IMR-90 (cell line): ENCODE measurements at regions of chr2 and their contacts with region 1.

Region 1: DNA sequence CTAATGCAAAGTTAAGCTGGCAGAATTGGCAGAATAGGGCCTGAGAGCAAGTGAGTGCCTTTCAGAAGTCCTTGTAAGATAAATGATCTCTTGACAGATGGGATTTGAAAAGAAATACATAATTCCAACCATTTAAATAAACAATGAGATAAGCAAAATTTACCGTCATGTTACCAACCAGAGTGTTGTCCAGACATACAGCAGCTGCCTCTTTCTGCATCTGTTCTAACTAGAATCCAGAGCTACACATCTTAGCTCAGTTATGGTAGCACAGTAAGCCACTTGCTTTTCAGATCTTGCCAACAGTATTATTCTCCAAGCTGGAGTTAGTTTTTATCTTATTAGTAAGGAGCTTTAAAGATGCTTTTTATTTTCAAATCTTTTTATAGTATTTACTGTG is 179.6 kb downstream of the BARD1 start:
- DNase-seq: peak; percentile 47
- ATAC-seq: peak; percentile 59
- H3K4me3 ChIP-seq: no peak overlapping the region
- H3K27ac ChIP-seq: no peak overlapping the region
- H3K4me1 ChIP-seq: peaks cover 2% of the 10 kb centered on the region; the same call in 1 of the 2 replicates
- H3K27me3 ChIP-seq: no peaks in the 10 kb centered on the region
- CTCF ChIP-seq: no peak
- POLR2A ChIP-seq: no peak
- RAD21 ChIP-seq: no peak

Region 2: DNA sequence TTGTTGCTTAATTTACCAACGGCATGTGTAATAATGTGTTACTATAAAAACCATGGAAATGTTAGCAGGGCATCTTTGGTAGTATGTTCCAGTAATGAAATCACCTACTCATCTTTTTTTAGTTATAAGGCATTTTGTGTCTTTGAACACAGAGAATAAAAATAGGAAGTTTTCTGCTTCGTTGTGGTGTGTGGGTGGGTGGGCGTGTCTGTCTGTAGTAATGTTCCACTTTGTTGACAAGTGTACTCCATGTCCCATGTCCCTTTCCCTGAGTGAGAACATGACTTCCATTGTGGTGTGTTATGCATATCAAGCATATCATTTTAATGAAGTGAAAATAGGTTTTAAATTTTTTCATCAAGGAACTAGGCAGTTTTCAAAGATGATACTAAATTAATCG is 69.7 kb before region 1 on chr2:
- CTCF ChIA-PET with region 1: no interaction called
- POLR2A ChIA-PET with region 1: interaction called, 21 read pairs
- dilution Hi-C with region 1: no loop called
- in situ Hi-C with region 1: no loop called
- intact Hi-C with region 1: no loop called
- DNase-seq: no peak
- ATAC-seq: no peak
- H3K4me3 ChIP-seq: no peak overlapping the region
- H3K27ac ChIP-seq: no peak overlapping the region
- H3K4me1 ChIP-seq: no peaks in the 10 kb centered on the region
- H3K27me3 ChIP-seq: no peaks in the 10 kb centered on the region
- CTCF ChIP-seq: no peak
- POLR2A ChIP-seq: no peak
- RAD21 ChIP-seq: no peak